BJ (cell line): ENCODE measurements at regions of chr17 and their contacts with region 1.

Region 1: DNA sequence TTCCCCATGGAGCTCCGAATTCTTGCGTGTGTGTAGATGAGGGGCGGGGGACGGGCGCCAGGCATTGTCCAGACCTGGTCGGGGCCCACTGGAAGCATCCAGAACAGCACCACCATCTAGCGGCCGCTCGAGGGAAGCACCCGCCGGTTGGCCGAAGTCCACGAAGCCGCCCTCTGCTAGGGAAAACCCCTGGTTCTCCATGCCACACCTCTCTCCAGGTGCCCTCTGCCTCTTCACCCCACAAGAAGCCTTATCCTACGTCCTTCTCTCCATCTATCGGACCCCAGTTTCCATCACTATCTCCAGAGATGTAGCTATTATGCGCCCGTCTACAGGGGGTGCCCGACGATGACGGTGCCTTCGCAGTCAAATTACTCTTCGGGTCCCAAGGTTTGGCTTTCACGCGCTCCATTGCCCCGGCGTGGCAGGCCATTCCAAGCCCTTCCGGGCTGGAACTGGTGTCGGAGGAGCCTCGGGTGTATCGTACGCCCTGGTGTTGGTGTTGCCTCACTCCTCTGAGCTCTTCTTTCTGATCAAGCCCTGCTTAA is 617 bp upstream of the SENP3 start:
- DNase-seq: no peak
- H3K4me3 ChIP-seq: peak overlapping the region; percentile 85
- H3K27me3 ChIP-seq: no peaks in the 10 kb centered on the region
- CTCF ChIP-seq: peak; percentile 92

Region 2: GRCh38 chr17:7351665-7352501 is 209.2 kb before region 1 on chr17 and contains the start of gene KCTD11:
- CTCF ChIA-PET with region 1: interaction called, 40 read pairs
- POLR2A ChIA-PET with region 1: interaction called, 4 read pairs
- DNase-seq: peak; percentile 63
- H3K4me3 ChIP-seq: peak within 1 kb of the TSS; percentile 71
- H3K27me3 ChIP-seq: no peaks in the 10 kb centered on the region
- CTCF ChIP-seq: no peak; the same call in 1 of the 2 replicates
- polyA plus RNA-seq, gene KCTD11: 16.2 and 19.8 TPM in 2 replicates

Region 3: GRCh38 chr17:7440113-7440833 is 120.8 kb before region 1 on chr17:
- CTCF ChIA-PET with region 1: interaction called, 21 read pairs
- POLR2A ChIA-PET with region 1: interaction called, 3 read pairs
- DNase-seq: no peak
- H3K4me3 ChIP-seq: peak overlapping the region; percentile 38
- H3K27me3 ChIP-seq: peaks cover 23% of the 10 kb centered on the region
- CTCF ChIP-seq: no peak

Region 4: GRCh38 chr17:7509937-7510336 is 51.2 kb before region 1 on chr17:
- CTCF ChIA-PET with region 1: interaction called, 95 read pairs
- POLR2A ChIA-PET with region 1: no interaction called
- DNase-seq: no peak
- H3K4me3 ChIP-seq: no peak overlapping the region
- H3K27me3 ChIP-seq: no peaks in the 10 kb centered on the region
- CTCF ChIP-seq: no peak

Region 5: GRCh38 chr17:7523033-7523432 is 38.1 kb before region 1 on chr17:
- CTCF ChIA-PET with region 1: interaction called, 20 read pairs
- POLR2A ChIA-PET with region 1: no interaction called
- DNase-seq: no peak
- H3K4me3 ChIP-seq: no peak overlapping the region
- H3K27me3 ChIP-seq: no peaks in the 10 kb centered on the region
- CTCF ChIP-seq: peak; percentile 40

Region 6: GRCh38 chr17:7572588-7573323 is 11.7 kb after region 1 on chr17:
- CTCF ChIA-PET with region 1: interaction called, 20 read pairs
- POLR2A ChIA-PET with region 1: no interaction called
- DNase-seq: peak; percentile 97
- H3K4me3 ChIP-seq: peak overlapping the region; percentile 100
- H3K27me3 ChIP-seq: no peaks in the 10 kb centered on the region
- CTCF ChIP-seq: 0 out of 2 replicates have a peak, but pooled peaks have one; percentile 2

Region 7: DNA sequence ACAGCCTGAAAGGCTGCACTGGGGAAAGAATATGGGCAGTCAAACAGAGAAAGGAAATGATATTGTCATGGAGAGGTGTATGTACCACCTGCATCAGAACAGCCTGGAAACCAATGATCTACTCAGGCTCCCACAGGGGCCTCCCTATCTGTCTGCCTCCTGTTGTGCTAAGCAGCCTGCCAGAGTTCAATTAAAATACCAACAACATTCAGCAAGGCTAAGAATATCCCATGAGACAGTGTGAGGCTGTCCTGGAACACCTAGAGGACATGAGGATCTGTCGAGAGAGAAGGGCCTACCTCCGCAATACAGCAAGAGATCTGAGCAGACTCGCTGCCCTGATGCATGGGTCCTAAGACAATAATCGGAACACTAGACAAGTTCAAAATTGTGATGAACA is 45.2 kb after region 1 on chr17:
- CTCF ChIA-PET with region 1: no interaction called
- POLR2A ChIA-PET with region 1: no interaction called
- DNase-seq: no peak
- H3K4me3 ChIP-seq: no peak overlapping the region
- H3K27me3 ChIP-seq: no peaks in the 10 kb centered on the region
- CTCF ChIP-seq: no peak

Region 8: DNA sequence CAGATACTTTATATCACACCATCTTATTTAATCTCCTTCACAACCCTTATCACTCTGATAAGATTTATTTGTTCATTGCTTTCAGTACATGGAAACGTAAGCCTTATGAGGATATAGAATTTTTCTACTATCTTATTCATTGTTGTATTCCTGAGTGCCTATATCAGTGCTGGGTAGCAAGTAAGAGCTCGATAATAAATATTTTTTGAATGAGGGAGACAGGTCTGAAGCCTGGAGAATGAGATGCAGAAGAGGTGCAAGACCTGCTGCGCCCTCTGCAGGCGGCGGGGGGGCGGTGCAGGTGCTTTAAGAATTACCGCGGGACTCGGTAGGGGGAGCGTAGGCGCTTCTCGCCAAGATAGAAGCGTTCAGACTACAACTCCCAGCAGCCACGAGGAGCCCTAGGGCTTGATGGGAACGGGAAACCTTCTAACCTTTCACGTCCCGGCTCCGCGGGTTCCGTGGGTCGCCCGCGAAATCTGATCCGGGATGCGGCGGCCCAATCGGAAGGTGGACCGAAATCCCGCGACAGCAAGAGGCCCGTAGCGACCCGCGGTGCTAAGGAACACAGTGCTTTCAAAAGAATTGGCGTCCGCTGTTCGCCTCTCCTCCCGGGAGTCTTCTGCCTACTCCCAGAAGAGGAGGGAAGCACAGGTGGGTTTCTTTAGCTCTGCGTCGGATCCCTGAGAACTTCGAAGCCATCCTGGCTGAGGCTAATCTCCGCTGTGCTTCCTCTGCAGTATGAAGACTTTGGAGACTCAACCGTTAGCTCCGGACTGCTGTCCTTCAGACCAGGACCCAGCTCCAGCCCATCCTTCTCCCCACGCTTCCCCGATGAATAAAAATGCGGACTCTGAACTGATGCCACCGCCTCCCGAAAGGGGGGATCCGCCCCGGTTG is 127.1 kb after region 1 on chr17 and contains the start of gene WRAP53:
- CTCF ChIA-PET with region 1: interaction called, 10 read pairs
- POLR2A ChIA-PET with region 1: no interaction called
- DNase-seq: peak; percentile 98
- H3K4me3 ChIP-seq: peak within 1 kb of the TSS; percentile 52
- H3K27me3 ChIP-seq: no peaks in the 10 kb centered on the region
- CTCF ChIP-seq: peak; percentile 99
- polyA plus RNA-seq, gene WRAP53: 5.8 and 7.9 TPM in 2 replicates

Region 9: DNA sequence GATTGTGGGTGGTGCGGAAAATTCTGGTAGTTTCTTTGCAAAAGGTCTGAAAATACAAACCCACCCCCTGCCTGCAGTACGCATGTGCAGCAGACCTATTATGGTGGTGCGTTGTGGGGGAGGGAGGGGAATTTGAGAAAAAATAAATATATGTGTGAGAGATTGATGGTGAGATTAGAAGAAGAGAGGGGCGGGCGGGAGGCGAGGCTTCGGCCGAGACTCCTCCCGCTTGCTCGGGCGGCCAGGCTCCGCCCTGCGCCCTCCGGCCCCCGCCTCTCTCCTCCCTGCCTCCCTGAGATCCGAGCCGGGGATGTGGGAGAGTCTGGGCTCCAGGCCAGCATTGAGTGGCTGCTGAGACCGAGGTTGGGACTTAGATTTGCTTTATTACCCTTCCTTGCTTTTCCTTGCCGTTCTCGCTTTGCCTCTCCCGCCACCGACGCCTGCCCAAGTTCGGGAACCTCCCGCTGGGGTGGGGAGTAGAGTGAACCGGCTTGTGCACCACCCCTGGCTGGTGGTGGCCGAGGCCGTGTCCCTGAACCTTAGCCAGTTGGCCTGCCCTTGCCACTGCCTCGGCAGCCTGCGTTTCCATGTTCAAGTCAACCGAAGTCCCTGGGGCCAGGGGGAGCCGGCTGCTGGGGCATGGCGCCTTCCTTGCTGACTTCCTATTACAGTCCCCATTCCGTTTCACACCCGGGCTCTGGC is 326.5 kb after region 1 on chr17:
- CTCF ChIA-PET with region 1: no interaction called
- POLR2A ChIA-PET with region 1: no interaction called
- DNase-seq: peak; percentile 88
- H3K4me3 ChIP-seq: peak overlapping the region; percentile 74
- H3K27me3 ChIP-seq: no peaks in the 10 kb centered on the region
- CTCF ChIP-seq: no peak